ENCODE measurements at regions of chr6 and their contacts with region 1.

Region 1: DNA sequence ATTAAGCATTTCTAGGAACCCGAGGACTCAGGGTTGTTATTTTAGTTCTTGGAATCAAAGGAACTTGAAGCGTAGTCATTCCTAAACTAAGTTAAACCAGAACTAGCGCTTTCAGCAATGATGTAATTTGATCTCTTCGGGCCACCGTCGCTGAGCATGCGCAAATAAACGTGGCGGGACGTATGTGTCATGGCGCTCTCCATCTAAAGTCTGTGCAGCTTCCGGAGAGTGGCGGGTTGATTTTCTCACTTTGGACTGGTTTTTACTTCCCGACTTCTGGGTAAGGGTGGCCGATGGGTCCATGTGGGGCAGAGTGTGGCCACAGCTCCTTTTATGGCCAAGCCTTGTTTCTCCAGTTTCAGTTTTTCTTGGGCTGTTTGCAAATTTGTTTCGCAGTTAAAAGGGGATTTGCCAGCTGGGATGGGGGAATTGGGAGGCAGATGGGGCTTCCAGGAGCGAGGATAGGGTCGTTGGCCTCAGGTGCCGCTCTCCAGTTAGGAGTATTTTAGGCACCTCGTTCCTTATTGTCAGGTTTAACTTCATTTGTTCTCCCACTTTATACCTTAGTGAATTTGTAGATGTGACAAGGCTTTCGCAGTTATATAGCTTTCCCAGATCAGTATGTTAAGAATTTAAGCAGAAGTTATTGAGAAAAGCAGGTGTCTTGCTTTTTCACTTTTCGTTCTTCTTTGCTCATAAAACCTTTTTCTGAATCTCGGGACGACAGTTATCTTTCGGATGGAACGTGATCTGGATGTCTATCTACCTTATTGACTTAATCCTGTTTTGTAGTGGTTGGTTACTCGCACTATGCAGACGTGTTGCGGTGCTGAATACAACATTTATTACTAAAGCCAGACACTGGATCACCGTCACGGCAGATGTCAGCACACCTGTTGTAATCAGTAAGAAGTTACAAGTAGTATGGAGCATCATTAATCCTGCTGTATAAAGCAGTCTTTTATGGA is at the start of gene CDKAL1:
- DNase-seq: peak; percentile 93
- H3K4me3 ChIP-seq: peak within 1 kb of the TSS; percentile 78
- H3K27ac ChIP-seq: peak within 1 kb of the TSS; percentile 87
- H3K4me1 ChIP-seq: no peaks in the 10 kb centered on the region
- H3K27me3 ChIP-seq: no peaks in the 10 kb centered on the region
- CTCF ChIP-seq: no peak
- total RNA-seq, gene CDKAL1: 33.4 and 35.5 TPM in 2 replicates

Region 2: GRCh38 chr6:20092071-20092566 is 442.5 kb before region 1 on chr6:
- CTCF ChIA-PET with region 1: no interaction called
- POLR2A ChIA-PET with region 1: no interaction called
- intact Hi-C with region 1: loop called (anchors 2 kb)
- DNase-seq: peak; percentile 69
- H3K4me3 ChIP-seq: no peak overlapping the region
- H3K27ac ChIP-seq: no peak overlapping the region
- H3K4me1 ChIP-seq: peaks cover 3% of the 10 kb centered on the region
- H3K27me3 ChIP-seq: no peaks in the 10 kb centered on the region
- CTCF ChIP-seq: peak; percentile 70

Region 3: GRCh38 chr6:20291764-20292580 is 242.6 kb before region 1 on chr6:
- CTCF ChIA-PET with region 1: no interaction called
- POLR2A ChIA-PET with region 1: no interaction called
- intact Hi-C with region 1: loop called (anchors 1 kb)
- DNase-seq: peak; percentile 90
- H3K4me3 ChIP-seq: no peak overlapping the region
- H3K27ac ChIP-seq: no peak overlapping the region
- H3K4me1 ChIP-seq: no peaks in the 10 kb centered on the region
- H3K27me3 ChIP-seq: no peaks in the 10 kb centered on the region
- CTCF ChIP-seq: peak; percentile 89

Region 4: GRCh38 chr6:20340068-20340848 is 194.3 kb before region 1 on chr6:
- CTCF ChIA-PET with region 1: no interaction called
- POLR2A ChIA-PET with region 1: no interaction called
- intact Hi-C with region 1: no loop called
- DNase-seq: peak; percentile 58
- H3K4me3 ChIP-seq: no peak overlapping the region
- H3K27ac ChIP-seq: no peak overlapping the region
- H3K4me1 ChIP-seq: peaks cover 8% of the 10 kb centered on the region
- H3K27me3 ChIP-seq: no peaks in the 10 kb centered on the region
- CTCF ChIP-seq: peak; percentile 29; the same call in 1 of the 2 replicates

Region 5: GRCh38 chr6:21208081-21208795 is 673.7 kb after region 1 on chr6:
- CTCF ChIA-PET with region 1: no interaction called
- POLR2A ChIA-PET with region 1: interaction called, 12 read pairs
- intact Hi-C with region 1: no loop called
- DNase-seq: no peak
- H3K4me3 ChIP-seq: no peak overlapping the region
- H3K27ac ChIP-seq: no peak overlapping the region
- H3K4me1 ChIP-seq: no peaks in the 10 kb centered on the region
- H3K27me3 ChIP-seq: no peaks in the 10 kb centered on the region
- CTCF ChIP-seq: no peak